A673 (cell line): ENCODE measurements at regions of chr18 and their contacts with region 1.

Region 1: GRCh38 chr18:48834413-48835031 is 116.2 kb downstream of the SMAD7 start:
- DNase-seq: peak; percentile 98
- H3K4me3 ChIP-seq: no peak overlapping the region
- H3K27ac ChIP-seq: peak overlapping the region; percentile 47
- H3K4me1 ChIP-seq: peaks cover 64% of the 10 kb centered on the region
- H3K27me3 ChIP-seq: no peaks in the 10 kb centered on the region
- CTCF ChIP-seq: no peak

Region 2: GRCh38 chr18:48590678-48591077 is 243.8 kb before region 1 on chr18:
- CTCF ChIA-PET with region 1: no interaction called
- POLR2A ChIA-PET with region 1: interaction called, 10 read pairs
- intact Hi-C with region 1: no loop called
- DNase-seq: peak; percentile 66
- H3K4me3 ChIP-seq: no peak overlapping the region
- H3K27ac ChIP-seq: no peak overlapping the region
- H3K4me1 ChIP-seq: peaks cover 6% of the 10 kb centered on the region
- H3K27me3 ChIP-seq: no peaks in the 10 kb centered on the region
- CTCF ChIP-seq: no peak

Region 3: GRCh38 chr18:48742706-48743475 is 91.6 kb before region 1 on chr18:
- CTCF ChIA-PET with region 1: no interaction called
- POLR2A ChIA-PET with region 1: no interaction called
- intact Hi-C with region 1: no loop called
- DNase-seq: no peak
- H3K4me3 ChIP-seq: no peak overlapping the region
- H3K27ac ChIP-seq: no peak overlapping the region
- H3K4me1 ChIP-seq: no peaks in the 10 kb centered on the region
- H3K27me3 ChIP-seq: no peaks in the 10 kb centered on the region
- CTCF ChIP-seq: no peak

Region 4: GRCh38 chr18:48951448-48952286 is 117.1 kb after region 1 on chr18:
- CTCF ChIA-PET with region 1: no interaction called
- POLR2A ChIA-PET with region 1: no interaction called
- intact Hi-C with region 1: loop called (anchors 2 kb)
- DNase-seq: peak; percentile 89
- H3K4me3 ChIP-seq: peak overlapping the region; percentile 73
- H3K27ac ChIP-seq: peak overlapping the region; percentile 67
- H3K4me1 ChIP-seq: peaks cover 14% of the 10 kb centered on the region
- H3K27me3 ChIP-seq: no peaks in the 10 kb centered on the region
- CTCF ChIP-seq: 0 out of 2 replicates have a peak, but pooled peaks have one; percentile 13